PC-9 (cell line): ENCODE measurements at regions of chr11 and their contacts with region 1.

Region 1: GRCh38 chr11:65274735-65275682 is 13.2 kb downstream of the POLA2 start:
- DNase-seq: peak; percentile 89 to 97
- H3K4me3 ChIP-seq: no peak overlapping the region
- H3K27ac ChIP-seq: peak overlapping the region; percentile 60
- H3K4me1 ChIP-seq: peaks cover 39% of the 10 kb centered on the region
- H3K27me3 ChIP-seq: no peaks in the 10 kb centered on the region
- CTCF ChIP-seq: peak; percentile 95

Region 2: GRCh38 chr11:64916775-64917662 is 358.0 kb before region 1 on chr11 and contains the start of gene ATG2A:
- CTCF ChIA-PET with region 1: interaction called, 14 read pairs
- POLR2A ChIA-PET with region 1: no interaction called
- intact Hi-C with region 1: no loop called
- DNase-seq: peak; percentile 99
- H3K4me3 ChIP-seq: peak within 1 kb of the TSS; percentile 67
- H3K27ac ChIP-seq: peak within 1 kb of the TSS; percentile 50
- H3K4me1 ChIP-seq: peaks cover 16% of the 10 kb centered on the region
- H3K27me3 ChIP-seq: no peaks in the 10 kb centered on the region
- CTCF ChIP-seq: no peak
- total RNA-seq, gene ATG2A: 48.2 and 53.2 TPM in 2 replicates

Region 3: GRCh38 chr11:65040847-65041621 is 234.0 kb before region 1 on chr11 and contains the start of gene SAC3D1:
- CTCF ChIA-PET with region 1: no interaction called
- POLR2A ChIA-PET with region 1: no interaction called
- intact Hi-C with region 1: no loop called
- DNase-seq: peak; percentile 94 to 95
- H3K4me3 ChIP-seq: peak within 1 kb of the TSS; percentile 82
- H3K27ac ChIP-seq: peak within 1 kb of the TSS; percentile 67
- H3K4me1 ChIP-seq: peaks cover 25% of the 10 kb centered on the region
- H3K27me3 ChIP-seq: no peaks in the 10 kb centered on the region
- CTCF ChIP-seq: no peak
- total RNA-seq, gene SAC3D1: 33.9 and 48.0 TPM in 2 replicates

Region 4: DNA sequence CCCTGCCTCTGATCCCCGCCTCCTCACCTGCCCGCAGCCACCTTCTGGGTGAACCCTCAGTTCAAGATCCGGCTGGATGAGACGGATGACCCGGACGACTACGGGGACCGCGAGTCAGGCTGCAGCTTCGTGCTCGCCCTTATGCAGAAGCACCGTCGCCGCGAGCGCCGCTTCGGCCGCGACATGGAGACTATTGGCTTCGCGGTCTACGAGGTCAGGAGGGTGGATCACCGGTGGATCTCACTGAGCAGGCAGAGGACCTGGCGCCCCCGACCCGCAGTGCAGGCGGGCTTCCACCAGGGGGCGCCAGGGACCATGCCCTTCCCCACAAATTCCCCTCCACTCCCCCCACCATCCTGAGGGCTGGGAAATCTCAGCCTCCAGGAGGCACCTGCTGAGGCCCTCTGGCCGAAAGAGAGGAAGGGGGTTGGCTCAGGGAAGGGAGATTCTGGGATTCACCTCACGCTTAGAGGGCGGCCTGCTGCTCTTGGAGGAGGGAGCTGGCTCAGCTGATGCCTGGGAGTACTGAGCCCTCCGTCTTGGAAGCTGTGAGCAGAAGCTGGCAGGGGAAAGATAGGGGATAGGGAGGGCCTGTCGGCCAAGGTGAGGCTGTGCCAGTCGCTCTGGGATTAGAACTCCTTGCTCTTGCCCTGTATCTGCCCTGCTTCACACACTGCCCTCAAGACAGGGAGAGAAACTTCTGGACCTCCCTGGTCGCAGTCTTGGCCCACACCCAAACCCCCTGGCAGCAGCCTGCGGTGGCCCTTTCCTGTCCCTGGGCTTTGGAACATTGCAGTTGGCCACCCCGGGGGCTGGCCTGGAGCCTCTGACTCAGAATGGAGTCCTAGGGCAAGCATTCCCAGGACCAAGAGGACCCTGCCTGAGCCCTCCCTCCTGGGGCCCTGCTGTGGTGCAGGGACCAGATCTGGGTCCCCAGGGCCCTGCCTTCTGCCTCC is 70.1 kb before region 1 on chr11:
- CTCF ChIA-PET with region 1: no interaction called
- POLR2A ChIA-PET with region 1: interaction called, 12 read pairs
- intact Hi-C with region 1: no loop called
- DNase-seq: peak in 1 of 2 experiments; percentile 57
- H3K4me3 ChIP-seq: no peak overlapping the region
- H3K27ac ChIP-seq: peak overlapping the region; percentile 72
- H3K4me1 ChIP-seq: peaks cover 70% of the 10 kb centered on the region
- H3K27me3 ChIP-seq: no peaks in the 10 kb centered on the region
- CTCF ChIP-seq: peak; percentile 99

Region 5: GRCh38 chr11:65329944-65330403 is 55.0 kb after region 1 on chr11:
- CTCF ChIA-PET with region 1: interaction called, 102 read pairs
- POLR2A ChIA-PET with region 1: interaction called, 20 read pairs
- intact Hi-C with region 1: loop called (anchors 1 kb)
- DNase-seq: peak; percentile 75 to 80
- H3K4me3 ChIP-seq: peak overlapping the region; percentile 4; the same call in 1 of the 2 replicates
- H3K27ac ChIP-seq: peak overlapping the region; percentile 26; the same call in 1 of the 2 replicates
- H3K4me1 ChIP-seq: peaks cover 13% of the 10 kb centered on the region
- H3K27me3 ChIP-seq: no peaks in the 10 kb centered on the region
- CTCF ChIP-seq: peak; percentile 94

Region 6: DNA sequence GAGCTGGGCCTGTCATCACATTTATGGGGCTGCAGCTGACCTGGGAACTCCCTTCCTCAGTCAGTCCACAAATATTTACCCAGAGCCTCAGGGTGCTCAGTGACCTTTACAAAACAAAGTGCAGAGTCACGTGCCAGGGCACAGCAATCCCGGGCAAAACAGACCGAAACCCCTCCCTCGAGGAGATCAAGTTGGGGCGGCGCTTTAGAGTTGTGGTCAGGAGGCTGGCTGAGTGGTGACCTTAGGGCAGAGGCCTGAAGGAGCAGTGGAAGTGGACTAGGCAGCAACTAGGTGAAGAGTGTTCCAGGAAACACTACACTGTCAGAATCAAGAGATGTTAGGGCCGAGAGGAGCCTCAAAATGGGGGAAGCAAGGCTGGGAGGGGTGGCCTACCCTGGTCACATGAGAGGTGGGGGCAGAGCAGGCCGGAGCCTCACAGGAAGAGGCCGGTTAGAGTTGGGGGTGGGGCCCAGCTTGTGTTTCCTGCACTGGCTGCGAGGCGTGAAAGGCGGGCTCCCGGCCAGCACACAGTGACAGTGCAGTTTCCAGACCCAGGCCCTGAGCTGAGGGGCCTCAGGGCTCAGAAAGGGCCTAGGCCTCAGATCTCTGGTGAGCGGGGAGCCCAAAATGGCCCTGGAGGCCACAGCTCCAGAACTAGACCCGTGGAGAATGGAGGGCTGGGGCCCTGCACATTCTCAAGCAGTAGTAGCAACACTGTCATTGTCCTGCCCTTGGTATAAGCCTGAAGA is 143.9 kb after region 1 on chr11:
- CTCF ChIA-PET with region 1: interaction called, 17 read pairs
- POLR2A ChIA-PET with region 1: interaction called, 30 read pairs
- intact Hi-C with region 1: loop called (anchors 5 kb)
- DNase-seq: peak; percentile 98 to 99
- H3K4me3 ChIP-seq: peak overlapping the region; percentile 59
- H3K27ac ChIP-seq: peak overlapping the region; percentile 100
- H3K4me1 ChIP-seq: peaks cover 57% of the 10 kb centered on the region
- H3K27me3 ChIP-seq: no peaks in the 10 kb centered on the region
- CTCF ChIP-seq: no peak

Region 7: DNA sequence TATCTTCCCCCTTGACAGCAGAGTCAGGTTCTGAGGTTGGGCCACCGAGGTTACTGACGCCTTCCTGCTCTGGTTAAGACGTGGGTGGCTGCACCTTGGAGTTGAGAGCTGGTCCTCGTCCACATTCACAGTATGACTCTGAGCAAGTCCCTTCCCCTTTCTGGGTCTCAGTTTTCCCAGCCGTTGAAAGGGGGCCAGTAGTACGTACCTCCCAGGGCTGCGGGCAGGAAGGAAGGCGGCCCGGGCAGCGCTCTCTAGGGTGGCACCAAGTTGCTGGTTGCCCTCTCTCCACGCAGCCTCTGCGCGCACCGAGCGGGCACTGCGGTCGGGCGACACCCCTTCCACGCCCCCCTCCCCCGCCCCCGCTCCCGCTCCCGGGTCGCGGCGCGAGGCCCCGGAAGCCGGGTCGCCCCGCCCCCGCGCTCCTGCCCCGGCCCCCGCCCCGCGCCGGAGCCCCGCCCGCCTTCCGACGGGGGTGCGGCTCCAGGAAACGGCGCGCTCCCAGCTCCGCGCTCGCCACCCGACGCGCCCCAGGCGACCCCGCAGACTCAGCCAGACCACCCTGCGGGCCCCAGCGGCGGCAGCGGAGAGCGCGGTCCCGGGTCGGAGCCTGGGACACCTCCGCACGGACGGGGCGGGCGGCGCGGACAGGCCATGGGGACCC is 300.7 kb after region 1 on chr11 and contains the start of gene EHBP1L1:
- CTCF ChIA-PET with region 1: no interaction called
- POLR2A ChIA-PET with region 1: interaction called, 46 read pairs
- intact Hi-C with region 1: no loop called
- DNase-seq: peak in 1 of 2 experiments; percentile 80
- H3K4me3 ChIP-seq: peak within 1 kb of the TSS; percentile 81
- H3K27ac ChIP-seq: peak within 1 kb of the TSS; percentile 52
- H3K4me1 ChIP-seq: peaks cover 55% of the 10 kb centered on the region
- H3K27me3 ChIP-seq: no peaks in the 10 kb centered on the region
- CTCF ChIP-seq: no peak
- total RNA-seq, gene EHBP1L1: 123 and 170 TPM in 2 replicates